AG04449 (cell line): ENCODE measurements at regions of chr10 and their contacts with region 1.

Region 1: DNA sequence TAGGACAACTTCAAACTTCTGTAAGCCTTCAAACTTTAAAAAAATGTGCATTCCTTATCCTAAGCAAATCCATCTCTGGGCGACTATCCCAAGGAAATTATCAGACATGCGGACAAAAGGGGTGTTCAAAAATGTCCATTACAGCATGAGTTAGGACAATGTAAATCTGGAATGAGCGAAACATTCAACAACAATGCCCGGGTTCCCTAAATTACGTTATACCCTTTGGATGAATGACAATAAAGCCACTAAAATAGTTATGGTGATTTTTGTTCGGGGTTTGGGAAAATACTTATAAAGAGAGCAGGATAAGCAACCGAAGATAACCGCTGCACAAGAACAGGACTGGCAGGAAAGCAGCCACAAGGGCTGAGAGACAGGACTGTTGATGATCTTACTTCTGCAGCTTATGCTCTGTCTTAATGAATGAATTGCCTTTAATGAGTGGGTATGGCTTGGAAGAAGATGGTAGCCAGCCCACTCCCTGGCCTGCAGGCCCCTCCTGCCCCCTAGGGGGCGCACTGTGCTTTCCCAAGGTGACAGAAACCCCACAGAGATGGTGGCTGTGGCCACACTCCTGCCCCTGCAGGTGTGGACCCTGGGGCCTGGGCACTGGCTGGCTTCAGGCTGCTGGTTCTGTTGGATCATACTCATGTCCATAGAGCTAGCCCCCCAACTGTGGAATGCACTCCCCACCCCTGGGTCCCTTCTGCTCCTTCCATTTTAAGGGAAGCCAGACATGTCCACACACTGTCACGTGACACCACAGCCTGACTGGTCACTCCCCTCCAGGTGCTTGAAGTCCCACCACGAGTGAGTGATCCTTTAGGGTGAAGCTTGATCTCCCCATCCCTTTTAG is 45.0 kb downstream of the ZCCHC24 start:
- DNase-seq: no peak
- H3K4me3 ChIP-seq: no peak overlapping the region
- CTCF ChIP-seq: peak; percentile 70

Region 2: GRCh38 chr10:79422178-79422892 is 22.0 kb after region 1 on chr10:
- CTCF ChIA-PET with region 1: interaction called, 20 read pairs
- POLR2A ChIA-PET with region 1: interaction called, 4 read pairs
- DNase-seq: peak; percentile 74
- H3K4me3 ChIP-seq: peak overlapping the region; percentile 6; the same call in 1 of the 2 replicates
- CTCF ChIP-seq: no peak

Region 3: DNA sequence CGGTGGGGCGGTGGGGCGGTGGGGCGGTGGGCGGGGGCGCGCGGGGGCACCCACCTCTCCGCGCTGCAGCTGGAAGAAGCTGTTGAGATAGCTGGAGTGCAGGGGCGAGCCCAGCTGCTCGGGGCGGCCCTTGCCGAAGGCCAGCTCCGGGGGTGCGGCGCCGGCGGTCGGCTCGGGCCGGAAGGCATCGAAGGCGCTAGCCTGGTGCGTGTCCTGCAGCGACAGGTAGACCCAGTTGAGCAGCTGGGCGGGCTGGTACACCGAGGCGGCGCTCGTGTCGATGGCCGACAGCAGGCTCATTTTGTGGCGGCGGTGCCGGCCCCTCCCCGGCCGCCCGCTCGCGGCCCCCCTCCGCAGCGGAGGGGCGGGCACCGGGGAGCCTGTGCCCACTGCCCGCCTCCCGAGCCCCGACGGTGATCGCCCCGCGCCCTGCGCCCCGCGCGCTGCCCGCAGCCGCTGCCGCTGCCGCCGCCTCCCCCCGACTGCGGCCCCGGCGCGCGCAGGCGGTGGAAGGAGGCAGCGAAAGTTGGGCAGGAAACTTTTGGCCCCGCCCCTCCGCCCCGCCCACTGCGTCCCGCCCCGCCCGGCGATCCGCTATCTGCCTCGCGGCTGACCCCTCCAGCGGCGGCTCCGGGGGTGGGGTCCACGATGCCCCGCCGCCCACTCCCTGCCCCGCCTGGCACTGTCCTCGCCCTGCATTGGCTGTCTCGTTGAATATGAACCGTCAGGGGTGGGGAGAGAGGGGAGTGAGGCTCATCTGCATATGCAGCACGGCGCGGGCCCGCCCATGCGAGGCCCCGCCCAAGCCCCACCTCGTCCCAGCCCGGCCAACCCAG is 45.0 kb after region 1 on chr10 and contains the start of gene ZCCHC24:
- CTCF ChIA-PET with region 1: interaction called, 3 read pairs
- POLR2A ChIA-PET with region 1: interaction called, 11 read pairs
- DNase-seq: peak; percentile 85
- H3K4me3 ChIP-seq: peak within 1 kb of the TSS; percentile 79
- CTCF ChIP-seq: no peak

Region 4: GRCh38 chr10:79502561-79503309 is 102.4 kb after region 1 on chr10:
- CTCF ChIA-PET with region 1: no interaction called
- POLR2A ChIA-PET with region 1: no interaction called
- DNase-seq: no peak
- H3K4me3 ChIP-seq: no peak overlapping the region
- CTCF ChIP-seq: peak; percentile 23